Activated B cell treated with CpG ODN at 0.5 μM for 24 hours (primary cell): ENCODE measurements at regions of chr18 and their contacts with region 1.

Region 1: DNA sequence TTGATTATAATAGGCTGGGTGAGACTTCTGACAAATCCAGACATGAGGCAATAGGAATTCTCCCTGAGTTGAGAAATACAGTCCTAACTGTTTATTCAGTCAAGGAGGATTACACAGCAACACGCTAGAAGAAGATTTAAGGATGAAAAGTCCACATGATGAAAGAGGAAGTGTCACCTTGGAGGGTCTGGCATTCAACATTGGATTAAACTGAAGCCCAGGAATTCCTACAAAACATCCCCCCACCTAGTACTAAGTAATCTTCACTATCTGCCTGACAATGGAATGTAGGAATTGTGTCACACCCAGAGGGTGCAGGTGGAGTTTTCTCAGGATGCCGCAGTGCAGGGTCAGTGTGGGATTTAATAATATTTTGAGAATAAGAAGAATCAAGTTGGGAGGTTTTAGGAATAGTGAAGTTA is 142.4 kb downstream of the SOCS6 start:
- DNase-seq: no peak
- ATAC-seq: no peak
- H3K4me3 Mint-ChIP-seq: no peak overlapping the region
- H3K27ac Mint-ChIP-seq: no peak overlapping the region
- H3K4me1 Mint-ChIP-seq: peaks cover 1% of the 10 kb centered on the region
- H3K27me3 Mint-ChIP-seq: no peaks in the 10 kb centered on the region
- CTCF ChIP-seq: no peak

Region 2: GRCh38 chr18:68847219-68847837 is 1583.9 kb before region 1 on chr18:
- CTCF ChIA-PET with region 1: interaction called, 3 read pairs
- POLR2A ChIA-PET with region 1: no interaction called
- intact Hi-C with region 1: loop called (anchors 1 kb)
- DNase-seq: no peak
- ATAC-seq: no peak
- H3K4me3 Mint-ChIP-seq: no peak overlapping the region
- H3K27ac Mint-ChIP-seq: no peak overlapping the region
- H3K4me1 Mint-ChIP-seq: no peaks in the 10 kb centered on the region
- H3K27me3 Mint-ChIP-seq: no peaks in the 10 kb centered on the region
- CTCF ChIP-seq: no peak

Region 3: GRCh38 chr18:69035756-69036155 is 1395.5 kb before region 1 on chr18:
- CTCF ChIA-PET with region 1: no interaction called
- POLR2A ChIA-PET with region 1: no interaction called
- intact Hi-C with region 1: no loop called
- DNase-seq: no peak
- ATAC-seq: no peak
- H3K4me3 Mint-ChIP-seq: no peak overlapping the region
- H3K27ac Mint-ChIP-seq: no peak overlapping the region
- H3K4me1 Mint-ChIP-seq: no peaks in the 10 kb centered on the region
- H3K27me3 Mint-ChIP-seq: no peaks in the 10 kb centered on the region
- CTCF ChIP-seq: no peak

Region 4: GRCh38 chr18:70172225-70172624 is 259.0 kb before region 1 on chr18:
- CTCF ChIA-PET with region 1: interaction called, 3 read pairs
- POLR2A ChIA-PET with region 1: no interaction called
- intact Hi-C with region 1: loop called (anchors 1 kb)
- DNase-seq: no peak
- ATAC-seq: no peak
- H3K4me3 Mint-ChIP-seq: no peak overlapping the region
- H3K27ac Mint-ChIP-seq: no peak overlapping the region
- H3K4me1 Mint-ChIP-seq: no peaks in the 10 kb centered on the region
- H3K27me3 Mint-ChIP-seq: no peaks in the 10 kb centered on the region
- CTCF ChIP-seq: no peak

Region 5: GRCh38 chr18:70195852-70196434 is 235.3 kb before region 1 on chr18:
- CTCF ChIA-PET with region 1: interaction called, 50 read pairs
- POLR2A ChIA-PET with region 1: no interaction called
- intact Hi-C with region 1: loop called (anchors 1 kb)
- DNase-seq: no peak
- ATAC-seq: peak; percentile 41
- H3K4me3 Mint-ChIP-seq: no peak overlapping the region
- H3K27ac Mint-ChIP-seq: no peak overlapping the region
- H3K4me1 Mint-ChIP-seq: peaks cover 17% of the 10 kb centered on the region
- H3K27me3 Mint-ChIP-seq: no peaks in the 10 kb centered on the region
- CTCF ChIP-seq: peak; percentile 76

Region 6: GRCh38 chr18:70288851-70289328 is 142.3 kb before region 1 on chr18 and contains the start of gene SOCS6:
- CTCF ChIA-PET with region 1: no interaction called
- POLR2A ChIA-PET with region 1: no interaction called
- intact Hi-C with region 1: loop called (anchors 10 kb)
- DNase-seq: peak; percentile 29
- ATAC-seq: peak; percentile 64
- H3K4me3 Mint-ChIP-seq: peak within 1 kb of the TSS; percentile 82
- H3K27ac Mint-ChIP-seq: no peak within 1 kb of the TSS
- H3K4me1 Mint-ChIP-seq: peaks cover 13% of the 10 kb centered on the region
- H3K27me3 Mint-ChIP-seq: peaks cover 24% of the 10 kb centered on the region
- CTCF ChIP-seq: no peak
- total RNA-seq, gene SOCS6: 1.1 and 1.6 TPM in 2 replicates